Esophagus muscularis mucosa (tissue), 4 donors: ENCODE measurements at regions of chr5 and their contacts with region 1.

Region 1: GRCh38 chr5:31470608-31471007 is 61.3 kb downstream of the DROSHA start:
- DNase-seq: no peak
- H3K4me3 ChIP-seq: no peak overlapping the region
- H3K27ac ChIP-seq: peak overlapping the region in 1 of 4 donors; percentile 3
- H3K4me1 ChIP-seq: peaks cover 0 to 29% (median 11%) of the 10 kb centered on the region in 4 donors
- H3K27me3 ChIP-seq: no peaks in the 10 kb centered on the region
- CTCF ChIP-seq: no peak
- EP300 ChIP-seq: no peak
- POLR2A ChIP-seq: no peak

Region 2: DNA sequence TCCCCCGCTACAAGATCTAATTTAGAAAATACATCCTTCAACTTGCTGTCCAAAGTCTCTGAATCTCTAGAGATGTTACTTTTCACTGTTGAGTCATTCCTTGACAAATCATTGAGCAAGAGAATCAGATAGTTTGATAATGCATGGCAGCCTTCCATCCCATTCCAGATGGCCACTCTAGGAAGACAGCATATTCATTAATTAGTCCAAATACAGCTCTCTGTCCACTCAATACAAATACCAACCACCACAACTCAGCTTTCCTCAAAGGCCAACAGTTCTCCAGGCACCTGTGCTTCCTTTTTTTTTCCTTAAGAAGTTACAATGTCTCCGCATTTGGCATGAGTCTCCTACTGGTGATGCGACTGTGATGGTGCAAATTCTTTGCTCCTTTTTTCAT is 11.0 kb before region 1 on chr5:
- intact Hi-C with region 1: loop called (anchors 1 kb)
- DNase-seq: no peak
- H3K4me3 ChIP-seq: no peak overlapping the region
- H3K27ac ChIP-seq: no peak overlapping the region
- H3K4me1 ChIP-seq: peaks cover 0 to 4% (median 0%) of the 10 kb centered on the region in 4 donors
- H3K27me3 ChIP-seq: no peaks in the 10 kb centered on the region
- CTCF ChIP-seq: no peak
- EP300 ChIP-seq: no peak
- POLR2A ChIP-seq: no peak